CD8-positive, alpha-beta T cell (primary cell): ENCODE measurements at regions of chr4 and their contacts with region 1.

Region 1: DNA sequence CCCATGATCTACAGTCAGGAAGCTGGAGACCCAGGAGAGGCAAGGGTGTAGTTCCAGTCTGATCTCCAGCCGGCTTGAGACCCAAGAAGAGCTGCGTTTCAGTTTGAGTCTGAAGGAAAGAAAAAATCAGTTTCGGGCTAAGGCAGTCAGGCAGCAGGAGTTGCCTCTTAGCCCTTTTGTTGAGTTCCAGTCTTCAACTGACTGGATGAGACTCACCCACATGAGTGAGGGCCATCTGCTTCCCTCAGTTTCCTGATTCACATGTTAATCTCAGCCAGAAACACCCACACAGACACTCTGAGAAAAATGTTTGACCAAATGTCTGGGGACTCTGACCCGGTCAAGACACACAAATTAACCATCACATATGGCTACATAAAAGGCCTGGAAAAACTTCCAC is 73.6 kb upstream of the ELOVL6 start:
- DNase-seq: no peak
- ATAC-seq: no peak
- H3K4me3 ChIP-seq: no peak overlapping the region
- H3K4me3 Mint-ChIP-seq: no peak overlapping the region
- H3K27ac ChIP-seq: no peak overlapping the region
- H3K27ac Mint-ChIP-seq: no peak overlapping the region
- H3K4me1 ChIP-seq: no peaks in the 10 kb centered on the region
- H3K4me1 Mint-ChIP-seq: no peaks in the 10 kb centered on the region
- H3K27me3 ChIP-seq: no peaks in the 10 kb centered on the region
- H3K27me3 Mint-ChIP-seq: no peaks in the 10 kb centered on the region
- CTCF ChIP-seq: no peak

Region 2: DNA sequence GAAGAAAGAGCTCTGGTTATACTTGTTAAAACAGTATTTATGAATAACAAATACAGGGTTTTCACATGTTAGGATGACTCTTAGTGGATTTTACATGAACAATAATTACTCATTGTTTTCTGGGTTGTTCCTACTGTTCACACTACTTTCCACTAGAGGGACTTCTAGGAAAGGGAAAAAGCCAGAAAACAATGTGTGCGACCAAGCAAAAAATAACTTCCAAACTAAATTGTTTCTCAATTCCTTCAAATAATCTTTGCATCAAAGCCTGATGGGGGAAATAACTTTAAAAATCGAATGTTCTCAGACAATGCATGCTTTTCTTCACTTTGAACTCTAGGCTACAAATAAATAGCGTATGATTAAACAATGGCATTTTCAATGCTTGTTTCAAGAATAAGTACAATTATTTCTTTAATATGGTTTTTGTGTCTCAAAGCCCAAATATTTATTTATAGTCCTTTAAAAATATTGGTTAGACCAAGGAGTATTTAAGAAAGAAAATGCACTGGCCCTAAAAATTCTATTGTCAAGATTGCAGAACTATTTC is 1437.1 kb before region 1 on chr4:
- CTCF ChIA-PET with region 1: no interaction called
- POLR2A ChIA-PET with region 1: no interaction called
- intact Hi-C with region 1: no loop called
- DNase-seq: peak in 1 of 9 experiments; percentile 7
- ATAC-seq: no peak
- H3K4me3 ChIP-seq: no peak overlapping the region
- H3K4me3 Mint-ChIP-seq: no peak overlapping the region
- H3K27ac ChIP-seq: no peak overlapping the region
- H3K27ac Mint-ChIP-seq: no peak overlapping the region
- H3K4me1 ChIP-seq: no peaks in the 10 kb centered on the region
- H3K4me1 Mint-ChIP-seq: no peaks in the 10 kb centered on the region
- H3K27me3 ChIP-seq: peaks cover 0 to 3% of the 10 kb centered on the region in 2 experiments
- H3K27me3 Mint-ChIP-seq: peaks cover 2% of the 10 kb centered on the region
- CTCF ChIP-seq: no peak

Region 3: DNA sequence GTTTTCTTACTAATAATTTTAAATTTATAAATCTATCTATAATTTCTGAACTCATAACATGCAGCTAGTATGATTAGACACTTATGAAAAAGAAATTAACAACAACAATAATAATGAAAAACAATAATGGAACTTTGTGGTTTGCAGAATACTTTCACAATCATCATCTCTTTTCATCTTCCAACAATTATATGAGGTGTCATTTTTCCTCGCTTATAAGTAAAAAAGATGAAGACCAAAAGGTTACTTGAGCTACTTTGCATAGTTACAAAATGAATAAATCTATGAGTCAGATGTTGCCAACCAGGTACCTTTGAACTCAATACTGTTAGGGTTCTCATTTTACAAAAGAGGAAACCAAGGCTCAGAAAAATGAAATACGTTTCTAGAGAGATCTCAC is 24.9 kb after region 1 on chr4:
- CTCF ChIA-PET with region 1: no interaction called
- POLR2A ChIA-PET with region 1: no interaction called
- intact Hi-C with region 1: loop called in 1 of 2 experiments (anchors 1 kb)
- DNase-seq: no peak
- ATAC-seq: no peak
- H3K4me3 ChIP-seq: no peak overlapping the region
- H3K4me3 Mint-ChIP-seq: no peak overlapping the region
- H3K27ac ChIP-seq: no peak overlapping the region
- H3K27ac Mint-ChIP-seq: no peak overlapping the region
- H3K4me1 ChIP-seq: no peaks in the 10 kb centered on the region
- H3K4me1 Mint-ChIP-seq: no peaks in the 10 kb centered on the region
- H3K27me3 ChIP-seq: no peaks in the 10 kb centered on the region
- H3K27me3 Mint-ChIP-seq: peaks cover 11% of the 10 kb centered on the region
- CTCF ChIP-seq: no peak